Endothelial cell of umbilical vein (primary cell): ENCODE measurements at regions of chr3 and their contacts with region 1.

Region 1: GRCh38 chr3:105366326-105367062 is at the start of gene ALCAM:
- DNase-seq: peak; percentile 99
- H3K4me3 ChIP-seq: peak within 1 kb of the TSS; percentile 49 to 83 (median 80)
- H3K27ac ChIP-seq: peak within 1 kb of the TSS; percentile 96
- H3K4me1 ChIP-seq: peaks cover 46% of the 10 kb centered on the region
- H3K27me3 ChIP-seq: no peaks in the 10 kb centered on the region
- CTCF ChIP-seq: peak; percentile 75 to 78
- POLR2A ChIP-seq: no peak
- total RNA-seq, gene ALCAM: 118 and 138 TPM in 2 replicates

Region 2: DNA sequence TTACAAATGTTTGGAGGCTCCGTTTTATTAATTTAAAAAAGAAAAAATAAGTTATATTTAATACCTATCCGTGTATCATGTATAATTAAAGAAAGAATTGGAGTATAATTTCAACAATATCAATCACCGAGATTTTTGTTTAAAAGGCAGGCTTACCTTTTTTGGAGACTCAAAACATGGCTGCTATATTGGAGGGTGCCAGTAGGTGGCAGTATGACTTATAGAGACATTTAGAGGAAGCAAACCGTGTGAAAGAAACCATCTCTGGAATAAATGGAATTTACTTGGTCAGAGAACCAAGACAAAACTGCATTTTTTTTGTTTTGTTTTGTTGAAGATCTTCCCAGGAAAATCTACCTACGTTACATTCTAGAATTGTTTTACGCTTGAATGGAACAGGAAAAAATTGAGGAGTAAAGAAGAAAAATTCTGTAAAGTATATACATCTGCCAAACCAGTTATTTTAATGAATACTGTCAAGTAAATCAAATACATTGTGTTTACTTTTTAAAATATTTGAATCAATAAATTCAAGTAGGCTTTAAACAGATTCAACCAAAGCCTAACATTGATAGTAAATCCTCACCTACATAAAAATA is 802.4 kb before region 1 on chr3:
- CTCF ChIA-PET with region 1: interaction called, 4 read pairs
- POLR2A ChIA-PET with region 1: no interaction called
- dilution Hi-C with region 1: no loop called
- intact Hi-C with region 1: loop called (anchors 1 kb)
- DNase-seq: peak; percentile 47
- H3K4me3 ChIP-seq: no peak overlapping the region
- H3K27ac ChIP-seq: no peak overlapping the region
- H3K4me1 ChIP-seq: no peaks in the 10 kb centered on the region
- H3K27me3 ChIP-seq: no peaks in the 10 kb centered on the region
- CTCF ChIP-seq: peak; percentile 45 to 52
- POLR2A ChIP-seq: no peak

Region 3: GRCh38 chr3:104763007-104763406 is 603.5 kb before region 1 on chr3:
- CTCF ChIA-PET with region 1: no interaction called
- POLR2A ChIA-PET with region 1: no interaction called
- dilution Hi-C with region 1: no loop called
- intact Hi-C with region 1: loop called (anchors 5 kb)
- DNase-seq: peak; percentile 61
- H3K4me3 ChIP-seq: no peak overlapping the region
- H3K27ac ChIP-seq: no peak overlapping the region
- H3K4me1 ChIP-seq: peaks cover 4% of the 10 kb centered on the region
- H3K27me3 ChIP-seq: no peaks in the 10 kb centered on the region
- CTCF ChIP-seq: no peak
- POLR2A ChIP-seq: no peak

Region 4: GRCh38 chr3:105108823-105109222 is 257.7 kb before region 1 on chr3:
- CTCF ChIA-PET with region 1: interaction called, 3 read pairs
- POLR2A ChIA-PET with region 1: no interaction called
- dilution Hi-C with region 1: no loop called
- intact Hi-C with region 1: loop called (anchors 5 kb)
- DNase-seq: peak; percentile 40
- H3K4me3 ChIP-seq: no peak overlapping the region
- H3K27ac ChIP-seq: no peak overlapping the region
- H3K4me1 ChIP-seq: peaks cover 6% of the 10 kb centered on the region
- H3K27me3 ChIP-seq: no peaks in the 10 kb centered on the region
- CTCF ChIP-seq: no peak
- POLR2A ChIP-seq: no peak

Region 5: DNA sequence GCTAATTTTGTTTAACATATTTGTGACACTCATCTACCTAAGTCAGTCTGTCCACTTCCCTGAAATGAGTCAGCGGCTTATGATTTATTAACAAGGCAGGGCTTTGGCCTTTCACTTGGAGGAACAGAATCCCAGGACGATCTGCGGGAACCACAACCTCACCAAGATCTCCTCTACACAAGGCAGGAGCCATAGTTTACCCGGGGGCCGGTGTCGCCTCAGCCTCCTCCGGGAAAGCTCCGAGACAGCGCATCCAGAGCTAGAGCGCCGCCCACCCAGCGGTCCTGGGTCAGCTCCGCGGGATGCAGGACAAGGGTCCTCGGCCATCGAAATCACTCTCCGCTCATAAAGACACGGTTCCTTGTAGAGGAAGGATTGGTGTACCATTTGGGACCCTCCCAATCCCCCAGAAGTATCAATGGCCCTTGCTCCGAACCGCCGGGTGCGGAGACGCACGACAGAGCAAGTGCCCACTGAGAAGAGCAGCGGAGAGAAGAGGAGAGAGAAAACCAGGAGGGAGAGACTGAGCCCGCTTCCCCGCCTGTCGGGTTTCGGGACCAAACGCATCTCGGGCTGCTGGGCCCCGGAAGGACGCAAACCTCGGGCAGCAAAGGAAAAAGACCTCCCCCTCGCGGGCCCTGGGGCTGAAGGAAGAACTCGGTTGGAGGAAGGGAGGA is 12.9 kb before region 1 on chr3:
- CTCF ChIA-PET with region 1: interaction called, 4 read pairs
- POLR2A ChIA-PET with region 1: interaction called, 3 read pairs
- dilution Hi-C with region 1: no loop called
- intact Hi-C with region 1: loop called (anchors 1 kb)
- DNase-seq: peak; percentile 35
- H3K4me3 ChIP-seq: peak overlapping the region; percentile 21 to 43 (median 32)
- H3K27ac ChIP-seq: peak overlapping the region; percentile 78
- H3K4me1 ChIP-seq: peaks cover 46% of the 10 kb centered on the region
- H3K27me3 ChIP-seq: no peaks in the 10 kb centered on the region
- CTCF ChIP-seq: no peak
- POLR2A ChIP-seq: no peak

Region 6: DNA sequence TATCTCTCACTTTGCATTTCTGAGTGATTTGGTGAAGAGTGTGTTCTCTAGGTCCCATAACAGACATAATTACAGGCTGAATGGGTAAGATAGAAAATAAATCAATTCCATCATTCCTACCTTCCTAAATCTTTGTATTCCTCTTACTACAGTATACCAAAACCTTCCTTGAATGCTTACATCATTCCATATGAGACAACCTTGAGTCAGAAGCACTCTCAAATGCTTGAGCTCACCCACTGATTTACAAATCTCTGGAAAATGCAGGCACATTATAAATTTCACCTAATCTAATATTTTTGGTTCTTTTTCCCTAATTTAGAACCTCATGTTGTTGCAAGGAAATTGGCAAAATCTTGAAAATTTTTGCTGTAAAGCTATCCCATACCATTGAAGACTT is 263.2 kb after region 1 on chr3:
- CTCF ChIA-PET with region 1: no interaction called
- POLR2A ChIA-PET with region 1: no interaction called
- dilution Hi-C with region 1: no loop called
- intact Hi-C with region 1: no loop called
- DNase-seq: no peak
- H3K4me3 ChIP-seq: no peak overlapping the region
- H3K27ac ChIP-seq: no peak overlapping the region
- H3K4me1 ChIP-seq: no peaks in the 10 kb centered on the region
- H3K27me3 ChIP-seq: no peaks in the 10 kb centered on the region
- CTCF ChIP-seq: no peak
- POLR2A ChIP-seq: no peak

Region 7: DNA sequence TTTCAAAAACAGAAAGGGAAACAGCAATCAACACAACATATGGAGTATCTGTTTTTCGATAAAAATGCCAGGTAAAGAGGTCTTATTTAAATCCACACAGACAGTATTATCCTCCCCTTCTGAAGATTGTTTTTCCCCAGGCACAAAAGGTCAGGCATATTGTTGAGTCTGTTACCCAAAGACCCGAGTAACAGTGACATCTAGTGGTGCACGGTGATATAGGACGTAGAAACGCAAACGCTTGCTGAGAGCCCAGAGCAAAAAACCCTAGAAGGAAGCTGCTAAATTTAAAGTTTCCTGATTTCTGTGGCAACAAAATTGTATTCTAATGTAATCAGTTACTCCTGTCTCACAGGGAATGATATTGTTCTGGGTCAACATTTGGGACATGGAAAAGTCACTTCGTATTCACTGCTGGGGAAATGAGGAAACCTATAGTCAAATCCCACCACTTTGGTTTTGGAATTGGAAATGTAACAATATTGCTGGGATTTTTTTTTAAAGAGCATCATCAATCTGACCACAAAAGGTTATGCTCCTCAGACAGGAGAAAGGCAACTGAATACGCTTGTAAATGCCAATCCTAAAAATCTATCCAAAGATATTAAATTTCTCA is 1698.1 kb after region 1 on chr3:
- CTCF ChIA-PET with region 1: interaction called, 5 read pairs
- POLR2A ChIA-PET with region 1: no interaction called
- dilution Hi-C with region 1: no loop called
- intact Hi-C with region 1: loop called (anchors 1 kb)
- DNase-seq: peak; percentile 83
- H3K4me3 ChIP-seq: no peak overlapping the region
- H3K27ac ChIP-seq: no peak overlapping the region
- H3K4me1 ChIP-seq: peaks cover 14% of the 10 kb centered on the region
- H3K27me3 ChIP-seq: no peaks in the 10 kb centered on the region
- CTCF ChIP-seq: peak; percentile 63 to 68
- POLR2A ChIP-seq: no peak